Mammary epithelial cell (primary cell): ENCODE measurements at regions of chr6 and their contacts with region 1.

Region 1: DNA sequence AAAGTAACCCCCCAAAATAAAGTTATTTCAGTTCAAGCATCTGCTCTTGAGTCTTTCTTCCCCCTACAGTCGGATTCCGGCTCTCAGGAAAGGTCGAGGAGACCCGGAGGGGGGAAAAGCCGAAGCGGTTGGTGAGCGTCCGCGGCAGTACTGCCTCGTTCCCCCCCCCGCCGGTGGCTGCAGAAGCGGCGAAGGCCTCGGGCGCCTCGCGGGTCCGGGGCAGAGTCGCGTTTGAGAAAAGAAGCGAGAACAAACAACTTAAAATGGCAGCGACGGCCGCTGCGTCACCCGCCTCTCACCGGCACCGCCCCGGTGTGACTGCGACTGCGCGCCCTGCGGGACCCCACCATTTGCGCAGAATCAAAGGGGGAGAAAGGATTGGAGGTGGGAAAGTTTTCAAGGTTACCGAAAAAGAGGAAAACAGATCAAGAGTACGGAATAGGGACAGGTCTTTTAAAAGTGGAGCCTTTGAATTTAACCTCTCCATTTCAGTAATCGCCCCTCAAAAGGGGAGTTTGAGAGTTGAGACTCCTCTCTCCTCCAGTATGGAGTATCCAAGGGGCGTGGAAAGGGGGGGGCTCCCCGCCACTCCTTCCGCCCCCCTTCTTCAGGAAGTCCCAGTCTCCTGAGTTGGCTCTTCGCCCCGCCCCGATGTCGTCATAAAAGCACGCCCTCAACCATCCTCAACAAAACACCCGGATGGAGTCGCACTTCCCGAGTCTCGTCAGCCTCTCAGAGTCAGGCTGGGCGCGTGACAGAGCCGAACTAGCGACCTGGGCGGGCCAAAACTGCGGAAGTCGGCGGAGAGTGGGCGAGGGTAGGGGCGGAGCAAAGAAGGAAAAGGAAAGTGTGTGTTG is 1.9 kb upstream of the C6orf62 start:
- DNase-seq: peak; percentile 100
- H3K4me3 ChIP-seq: peak overlapping the region; percentile 64 to 99 (median 98)
- H3K27ac ChIP-seq: peak overlapping the region; percentile 99
- H3K4me1 ChIP-seq: peaks cover 9% of the 10 kb centered on the region
- H3K27me3 ChIP-seq: no peaks in the 10 kb centered on the region
- CTCF ChIP-seq: no peak

Region 2: DNA sequence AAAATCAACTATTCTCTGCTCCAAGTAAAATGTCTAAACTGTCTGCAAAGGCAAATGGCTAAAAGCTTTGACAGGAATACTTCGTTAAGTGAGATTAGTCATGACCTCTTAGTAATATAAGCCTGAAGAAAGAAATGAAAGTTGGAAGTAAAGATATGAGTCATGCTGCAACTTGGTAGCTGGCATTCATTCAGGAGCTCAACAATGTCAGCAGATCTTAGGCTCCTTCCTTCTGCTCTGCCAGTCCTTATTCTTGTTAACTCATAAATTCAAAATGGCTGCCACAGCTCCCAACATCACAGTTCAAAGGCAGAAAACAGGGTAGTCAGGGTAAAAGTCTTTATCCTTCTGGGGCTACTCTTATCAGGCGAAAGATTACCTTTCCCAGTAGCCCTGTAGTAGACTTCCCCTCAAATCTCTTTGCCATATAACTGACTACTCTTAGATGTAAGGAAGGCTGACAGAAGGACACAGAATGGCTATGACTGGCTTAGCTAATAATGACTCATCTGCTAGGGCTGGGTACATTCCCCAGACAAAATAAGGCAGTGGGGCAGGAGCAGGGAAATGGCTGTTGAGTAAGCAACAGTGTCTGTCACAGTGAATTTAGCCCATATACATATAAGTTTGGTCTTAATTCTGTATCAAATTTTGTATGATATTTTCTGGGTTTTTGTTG is 22.6 kb after region 1 on chr6:
- CTCF ChIA-PET with region 1: no interaction called
- dilution Hi-C with region 1: no loop called
- in situ Hi-C with region 1: no loop called
- intact Hi-C with region 1: loop called (anchors 1 kb)
- DNase-seq: peak; percentile 94
- H3K4me3 ChIP-seq: peak overlapping the region in 2 of 3 experiments; percentile 10 to 17
- H3K27ac ChIP-seq: peak overlapping the region; percentile 97
- H3K4me1 ChIP-seq: peaks cover 25% of the 10 kb centered on the region
- H3K27me3 ChIP-seq: no peaks in the 10 kb centered on the region
- CTCF ChIP-seq: no peak

Region 3: GRCh38 chr6:24774696-24775519 is 54.1 kb after region 1 on chr6 and contains the start of gene GMNN:
- CTCF ChIA-PET with region 1: no interaction called
- dilution Hi-C with region 1: no loop called
- in situ Hi-C with region 1: no loop called
- intact Hi-C with region 1: loop called (anchors 2 kb)
- DNase-seq: peak; percentile 93
- H3K4me3 ChIP-seq: peak within 1 kb of the TSS; percentile 74 to 100 (median 100)
- H3K27ac ChIP-seq: peak within 1 kb of the TSS; percentile 93
- H3K4me1 ChIP-seq: peaks cover 5% of the 10 kb centered on the region
- H3K27me3 ChIP-seq: no peaks in the 10 kb centered on the region
- CTCF ChIP-seq: no peak
- total RNA-seq, gene GMNN: 8.0 to 36.3 TPM

Region 4: GRCh38 chr6:24802271-24803059 is 81.6 kb after region 1 on chr6:
- CTCF ChIA-PET with region 1: no interaction called
- dilution Hi-C with region 1: no loop called
- in situ Hi-C with region 1: no loop called
- intact Hi-C with region 1: no loop called
- DNase-seq: peak; percentile 6
- H3K4me3 ChIP-seq: no peak overlapping the region
- H3K27ac ChIP-seq: no peak overlapping the region
- H3K4me1 ChIP-seq: peaks cover 4% of the 10 kb centered on the region
- H3K27me3 ChIP-seq: no peaks in the 10 kb centered on the region
- CTCF ChIP-seq: no peak

Region 5: GRCh38 chr6:25017932-25018567 is 297.2 kb after region 1 on chr6:
- CTCF ChIA-PET with region 1: no interaction called
- dilution Hi-C with region 1: no loop called
- in situ Hi-C with region 1: no loop called
- intact Hi-C with region 1: loop called (anchors 2 kb)
- DNase-seq: peak; percentile 78
- H3K4me3 ChIP-seq: peak overlapping the region in 1 of 3 experiments; percentile 2
- H3K27ac ChIP-seq: peak overlapping the region; percentile 72
- H3K4me1 ChIP-seq: peaks cover 44% of the 10 kb centered on the region
- H3K27me3 ChIP-seq: no peaks in the 10 kb centered on the region
- CTCF ChIP-seq: peak; percentile 90

Region 6: DNA sequence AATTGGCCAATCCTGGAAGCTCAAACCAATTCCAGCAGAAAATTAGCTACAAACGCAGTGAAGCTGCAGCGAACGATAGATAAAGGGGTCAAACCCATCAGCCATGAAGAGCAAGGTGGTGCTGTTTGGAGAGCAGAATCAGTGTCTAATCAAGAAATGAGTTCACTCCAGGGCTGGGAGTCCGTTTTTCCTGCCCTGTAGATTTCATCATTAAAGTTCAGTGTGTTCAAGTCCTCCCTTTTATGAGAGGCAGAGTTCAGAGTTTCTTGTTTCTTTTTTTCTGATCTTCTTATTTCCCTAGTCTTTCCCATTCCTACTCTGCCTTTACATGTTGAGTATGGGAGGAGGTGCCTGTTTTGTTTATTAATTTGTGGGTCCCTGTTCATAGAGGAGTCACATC is 1080.6 kb after region 1 on chr6:
- CTCF ChIA-PET with region 1: no interaction called
- dilution Hi-C with region 1: no loop called
- in situ Hi-C with region 1: no loop called
- intact Hi-C with region 1: no loop called
- DNase-seq: no peak
- H3K4me3 ChIP-seq: no peak overlapping the region
- H3K27ac ChIP-seq: no peak overlapping the region
- H3K4me1 ChIP-seq: no peaks in the 10 kb centered on the region
- H3K27me3 ChIP-seq: peaks cover 8% of the 10 kb centered on the region
- CTCF ChIP-seq: no peak